ENCODE measurements at regions of chr15 and their contacts with region 1.

Region 1: DNA sequence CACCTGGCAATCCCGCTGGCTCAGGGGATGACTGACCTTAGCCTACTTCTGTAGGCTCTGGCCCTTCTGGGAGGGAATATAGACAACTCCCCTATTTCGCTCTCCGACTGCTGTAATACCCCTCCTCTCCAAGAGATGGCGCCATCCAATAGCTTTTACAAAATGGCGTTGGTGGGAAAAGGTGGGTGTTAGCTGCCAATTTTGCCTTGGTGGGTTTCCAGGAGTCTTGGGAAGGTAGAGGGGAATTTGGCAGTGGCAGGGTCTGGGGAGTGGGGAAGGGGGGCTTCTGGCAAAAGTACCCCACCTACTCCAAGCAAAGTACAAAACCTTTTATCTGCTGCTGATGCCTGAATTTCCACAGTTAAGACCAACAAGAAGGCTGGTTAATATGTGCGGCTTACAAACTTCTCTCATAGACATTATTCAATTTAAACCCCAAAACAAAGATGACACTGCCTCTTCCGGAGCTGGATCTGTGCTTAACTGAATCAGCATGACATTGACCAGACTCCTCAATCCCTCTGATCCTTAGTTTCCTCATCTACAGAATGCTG is 62.1 kb downstream of the RASGRF1 start:
- DNase-seq: peak; percentile 62
- ATAC-seq: peak; percentile 42
- H3K4me3 ChIP-seq: no peak overlapping the region
- H3K4me3 Mint-ChIP-seq: no peak overlapping the region
- H3K27ac ChIP-seq: no peak overlapping the region
- H3K27ac Mint-ChIP-seq: no peak overlapping the region
- H3K4me1 ChIP-seq: peaks cover 5 to 9% of the 10 kb centered on the region in 2 donors
- H3K4me1 Mint-ChIP-seq: peaks cover 9% of the 10 kb centered on the region
- H3K27me3 ChIP-seq: no peaks in the 10 kb centered on the region
- H3K27me3 Mint-ChIP-seq: no peaks in the 10 kb centered on the region
- CTCF ChIP-seq: peak; percentile 83

Region 2: GRCh38 chr15:77418966-77419835 is 1609.3 kb before region 1 on chr15:
- CTCF ChIA-PET with region 1: no interaction called
- POLR2A ChIA-PET with region 1: no interaction called
- intact Hi-C with region 1: no loop called
- DNase-seq: no peak
- ATAC-seq: no peak
- H3K4me3 ChIP-seq: peak overlapping the region; percentile 60 to 91 (median 76)
- H3K4me3 Mint-ChIP-seq: peak overlapping the region; percentile 96
- H3K27ac ChIP-seq: peak overlapping the region in 1 of 2 donors; percentile 71
- H3K27ac Mint-ChIP-seq: peak overlapping the region; percentile 96
- H3K4me1 ChIP-seq: peaks cover 16 to 17% of the 10 kb centered on the region in 2 donors
- H3K4me1 Mint-ChIP-seq: peaks cover 49% of the 10 kb centered on the region
- H3K27me3 ChIP-seq: no peaks in the 10 kb centered on the region
- H3K27me3 Mint-ChIP-seq: no peaks in the 10 kb centered on the region
- CTCF ChIP-seq: peak; percentile 15

Region 3: GRCh38 chr15:78859971-78860732 is 168.3 kb before region 1 on chr15:
- CTCF ChIA-PET with region 1: interaction called, 5 read pairs
- POLR2A ChIA-PET with region 1: no interaction called
- intact Hi-C with region 1: loop called (anchors 1 kb)
- DNase-seq: peak; percentile 82
- ATAC-seq: peak; percentile 81
- H3K4me3 ChIP-seq: peak overlapping the region; percentile 25 to 81 (median 53)
- H3K4me3 Mint-ChIP-seq: peak overlapping the region; percentile 81
- H3K27ac ChIP-seq: no peak overlapping the region
- H3K27ac Mint-ChIP-seq: peak overlapping the region; percentile 92
- H3K4me1 ChIP-seq: peaks cover 3 to 7% of the 10 kb centered on the region in 2 donors
- H3K4me1 Mint-ChIP-seq: peaks cover 7% of the 10 kb centered on the region
- H3K27me3 ChIP-seq: no peaks in the 10 kb centered on the region
- H3K27me3 Mint-ChIP-seq: no peaks in the 10 kb centered on the region
- CTCF ChIP-seq: peak; percentile 77

Region 4: GRCh38 chr15:78921940-78922339 is 106.5 kb before region 1 on chr15:
- CTCF ChIA-PET with region 1: interaction called, 25 read pairs
- POLR2A ChIA-PET with region 1: no interaction called
- intact Hi-C with region 1: loop called (anchors 5 kb)
- DNase-seq: no peak
- ATAC-seq: no peak
- H3K4me3 ChIP-seq: no peak overlapping the region
- H3K4me3 Mint-ChIP-seq: no peak overlapping the region
- H3K27ac ChIP-seq: no peak overlapping the region
- H3K27ac Mint-ChIP-seq: peak overlapping the region; percentile 69
- H3K4me1 ChIP-seq: no peaks in the 10 kb centered on the region
- H3K4me1 Mint-ChIP-seq: peaks cover 6% of the 10 kb centered on the region
- H3K27me3 ChIP-seq: no peaks in the 10 kb centered on the region
- H3K27me3 Mint-ChIP-seq: no peaks in the 10 kb centered on the region
- CTCF ChIP-seq: no peak

Region 5: GRCh38 chr15:78938658-78939488 is 89.6 kb before region 1 on chr15:
- CTCF ChIA-PET with region 1: interaction called, 12 read pairs
- POLR2A ChIA-PET with region 1: interaction called, 5 read pairs
- intact Hi-C with region 1: no loop called
- DNase-seq: peak; percentile 86
- ATAC-seq: peak; percentile 82
- H3K4me3 ChIP-seq: peak overlapping the region in 3 of 5 experiments; percentile 34 to 42 (median 35)
- H3K4me3 Mint-ChIP-seq: peak overlapping the region; percentile 73
- H3K27ac ChIP-seq: peak overlapping the region; percentile 84 to 86
- H3K27ac Mint-ChIP-seq: peak overlapping the region; percentile 91
- H3K4me1 ChIP-seq: peaks cover 68 to 81% of the 10 kb centered on the region in 2 donors
- H3K4me1 Mint-ChIP-seq: peaks cover 65% of the 10 kb centered on the region
- H3K27me3 ChIP-seq: no peaks in the 10 kb centered on the region
- H3K27me3 Mint-ChIP-seq: no peaks in the 10 kb centered on the region
- CTCF ChIP-seq: no peak

Region 6: DNA sequence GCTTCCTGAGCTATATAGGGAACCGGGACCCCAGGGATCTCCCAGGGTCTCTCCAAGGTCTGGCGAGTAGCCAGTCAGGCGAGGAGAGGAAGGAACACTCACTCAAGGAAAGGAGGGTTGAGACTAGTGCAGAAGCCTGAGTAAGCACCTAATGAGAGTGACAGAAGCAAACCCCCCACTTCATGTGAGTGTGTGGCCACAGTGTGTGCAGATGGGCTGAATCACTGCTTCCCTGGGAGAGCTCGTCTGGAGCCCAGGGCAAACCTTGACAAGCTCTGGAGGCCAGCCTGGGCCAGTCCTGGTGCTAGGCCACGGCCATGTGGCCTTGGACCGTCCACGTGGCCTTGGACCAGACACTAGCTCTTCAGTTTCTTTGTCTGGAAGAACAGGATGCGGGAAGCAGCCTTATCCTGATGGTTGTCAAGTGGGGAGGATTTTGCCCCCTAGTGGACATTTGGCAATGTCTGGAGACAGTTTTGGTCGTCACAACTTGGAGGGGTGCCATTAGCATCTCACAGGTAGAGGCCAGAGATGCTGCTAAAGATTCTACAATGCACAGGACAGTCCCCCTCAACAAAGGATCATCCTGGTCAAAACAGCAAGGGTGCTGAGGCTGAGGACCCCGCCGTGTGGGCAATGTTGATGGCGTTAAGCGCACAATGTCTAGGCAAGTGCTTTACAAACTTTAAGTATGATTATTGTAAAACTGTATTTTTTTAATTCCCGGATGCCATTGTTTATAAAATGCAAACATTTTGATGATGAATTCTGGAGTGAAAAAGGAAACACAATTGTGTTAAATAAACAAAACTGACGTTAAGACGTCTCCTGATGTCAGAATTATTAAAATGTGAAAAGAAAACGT is 48.8 kb before region 1 on chr15:
- CTCF ChIA-PET with region 1: interaction called, 13 read pairs
- POLR2A ChIA-PET with region 1: no interaction called
- intact Hi-C with region 1: no loop called
- DNase-seq: peak; percentile 66
- ATAC-seq: no peak
- H3K4me3 ChIP-seq: peak overlapping the region in 2 of 5 experiments; percentile 12 to 18
- H3K4me3 Mint-ChIP-seq: peak overlapping the region; percentile 83
- H3K27ac ChIP-seq: peak overlapping the region in 1 of 2 donors; percentile 5
- H3K27ac Mint-ChIP-seq: peak overlapping the region; percentile 96
- H3K4me1 ChIP-seq: peaks cover 38 to 46% of the 10 kb centered on the region in 2 donors
- H3K4me1 Mint-ChIP-seq: peaks cover 42% of the 10 kb centered on the region
- H3K27me3 ChIP-seq: peaks cover 0 to 2% (median 0%) of the 10 kb centered on the region in 4 experiments
- H3K27me3 Mint-ChIP-seq: peaks cover 2% of the 10 kb centered on the region
- CTCF ChIP-seq: peak; percentile 68

Region 7: DNA sequence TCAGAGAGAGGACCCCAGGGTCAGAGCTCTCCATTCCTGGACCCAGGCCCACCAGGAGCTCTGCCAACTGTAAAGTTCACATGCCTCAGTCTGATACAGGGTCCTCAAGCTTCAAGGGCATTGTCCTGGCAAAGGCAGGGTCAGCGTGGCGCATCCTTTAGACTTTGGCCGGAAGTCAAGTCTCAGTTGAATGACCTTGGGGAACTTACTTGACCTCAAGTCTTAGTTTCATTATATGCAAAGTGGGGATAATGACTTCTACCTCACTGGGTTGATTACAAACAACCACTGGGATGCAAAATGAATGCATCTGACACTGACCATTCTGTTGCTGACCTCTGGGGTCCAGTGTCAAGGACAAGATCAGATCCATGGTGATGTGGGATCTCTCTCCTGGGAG is 13.1 kb before region 1 on chr15:
- CTCF ChIA-PET with region 1: interaction called, 14 read pairs
- POLR2A ChIA-PET with region 1: no interaction called
- intact Hi-C with region 1: no loop called
- DNase-seq: no peak
- ATAC-seq: no peak
- H3K4me3 ChIP-seq: no peak overlapping the region
- H3K4me3 Mint-ChIP-seq: peak overlapping the region; percentile 75
- H3K27ac ChIP-seq: no peak overlapping the region
- H3K27ac Mint-ChIP-seq: peak overlapping the region; percentile 68
- H3K4me1 ChIP-seq: peaks cover 11 to 28% of the 10 kb centered on the region in 2 donors
- H3K4me1 Mint-ChIP-seq: peaks cover 36% of the 10 kb centered on the region
- H3K27me3 ChIP-seq: no peaks in the 10 kb centered on the region
- H3K27me3 Mint-ChIP-seq: no peaks in the 10 kb centered on the region
- CTCF ChIP-seq: no peak